CD4-positive, alpha-beta memory T cell (primary cell): ENCODE measurements at regions of chr16 and their contacts with region 1.

Region 1: DNA sequence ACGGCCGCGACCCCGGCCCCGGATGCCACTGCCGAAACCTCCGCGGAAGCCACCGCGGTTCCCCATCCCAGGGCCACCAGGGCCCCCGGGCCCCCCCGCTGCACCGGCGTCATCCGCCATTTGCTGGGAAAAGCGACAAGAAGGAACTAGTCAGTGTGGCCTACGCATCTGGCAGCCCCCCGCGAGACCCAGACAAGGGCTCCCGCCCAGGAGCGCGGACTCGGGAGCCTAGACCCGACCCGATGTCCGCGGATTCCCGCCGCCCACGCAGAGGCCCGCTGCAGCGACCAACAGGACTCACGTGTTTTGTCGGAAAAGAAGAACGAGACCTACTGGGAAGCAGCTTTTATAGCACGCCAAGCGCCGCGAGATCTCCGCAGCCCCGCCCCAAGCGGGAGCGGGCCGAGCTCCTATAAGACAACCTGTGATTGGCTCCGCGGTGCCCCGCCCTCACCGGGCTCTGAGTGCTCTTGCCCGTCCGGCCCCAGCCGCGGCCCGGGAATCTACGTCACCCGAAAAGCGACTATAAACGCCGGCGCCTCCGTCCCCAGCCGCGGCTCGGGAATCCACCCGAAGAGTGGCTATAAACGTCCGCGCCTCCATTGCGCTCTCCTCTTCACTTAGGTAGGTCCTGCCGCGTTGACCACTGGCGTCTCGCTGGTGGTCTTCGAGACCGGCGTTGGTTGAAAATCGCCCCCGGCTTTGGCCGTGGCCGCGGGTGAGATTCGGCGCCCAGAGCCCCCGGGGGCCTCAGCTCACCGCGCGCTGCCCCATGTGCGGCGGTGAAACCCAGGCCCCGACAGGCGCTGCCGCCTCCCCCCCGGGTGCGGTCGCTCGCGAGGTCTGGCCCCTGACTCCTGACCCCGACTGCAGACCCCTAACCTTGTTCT is at the start of gene RPS2:
- DNase-seq: peak; percentile 97 to 99 (median 99)
- H3K4me3 ChIP-seq: peak within 1 kb of the TSS; percentile 78 to 86
- H3K4me3 Mint-ChIP-seq: peak within 1 kb of the TSS; percentile 91 to 97 (median 94)
- H3K27ac ChIP-seq: peak within 1 kb of the TSS; percentile 97
- H3K27ac Mint-ChIP-seq: peak within 1 kb of the TSS; percentile 97 to 99 (median 98)
- H3K4me1 ChIP-seq: peaks cover 50% of the 10 kb centered on the region
- H3K4me1 Mint-ChIP-seq: peaks cover 28 to 59% (median 42%) of the 10 kb centered on the region in 4 donors
- H3K27me3 ChIP-seq: no peaks in the 10 kb centered on the region
- H3K27me3 Mint-ChIP-seq: no peaks in the 10 kb centered on the region
- total RNA-seq, gene RPS2: 2,828 to 2,894 TPM

Region 2: GRCh38 chr16:1782352-1783091 is 182.2 kb before region 1 on chr16 and contains the starts of genes NUBP2 and SPSB3:
- CTCF ChIA-PET with region 1: no interaction called
- POLR2A ChIA-PET with region 1: interaction called, 14 read pairs
- intact Hi-C with region 1: no loop called
- DNase-seq: peak; percentile 97 to 99 (median 99)
- H3K4me3 ChIP-seq: peak within 1 kb of the TSS; percentile 69 to 88
- H3K4me3 Mint-ChIP-seq: peak within 1 kb of the TSS; percentile 91 to 96 (median 94)
- H3K27ac ChIP-seq: peak within 1 kb of the TSS; percentile 79
- H3K27ac Mint-ChIP-seq: peak within 1 kb of the TSS; percentile 92 to 97 (median 94)
- H3K4me1 ChIP-seq: peaks cover 43% of the 10 kb centered on the region
- H3K4me1 Mint-ChIP-seq: peaks cover 13 to 46% (median 30%) of the 10 kb centered on the region in 4 donors
- H3K27me3 ChIP-seq: no peaks in the 10 kb centered on the region
- H3K27me3 Mint-ChIP-seq: no peaks in the 10 kb centered on the region
- total RNA-seq, gene NUBP2: 55.9 to 59.4 TPM
- total RNA-seq, gene SPSB3: 133 to 144 TPM

Region 3: DNA sequence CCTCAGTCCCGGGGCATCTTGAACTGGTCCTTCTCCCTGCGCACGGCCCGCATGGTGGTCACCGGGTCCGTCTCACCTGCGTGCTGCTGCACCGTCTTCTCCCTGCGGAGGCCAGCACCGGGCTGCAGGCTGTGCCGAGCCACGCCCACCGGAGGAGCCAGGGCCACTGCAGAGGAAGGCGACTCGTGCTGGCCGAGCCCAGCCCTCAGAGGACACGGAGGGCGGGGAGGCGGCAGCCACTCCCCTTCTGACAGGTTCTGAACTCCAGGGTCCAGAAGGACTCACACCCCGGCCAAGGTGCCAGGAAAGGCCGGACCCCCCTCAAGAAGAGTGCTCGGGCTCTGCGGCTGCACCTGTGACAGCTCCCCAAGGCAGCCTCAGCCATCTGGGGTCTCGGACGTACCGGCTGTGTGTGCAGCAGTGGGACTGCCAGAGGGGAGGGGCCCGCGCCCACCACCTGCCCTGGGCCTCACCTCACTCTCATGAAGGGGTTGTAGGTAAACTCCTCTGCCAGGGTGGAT is 155.4 kb before region 1 on chr16:
- CTCF ChIA-PET with region 1: no interaction called
- POLR2A ChIA-PET with region 1: no interaction called
- intact Hi-C with region 1: no loop called
- DNase-seq: no peak
- H3K4me3 ChIP-seq: no peak overlapping the region
- H3K4me3 Mint-ChIP-seq: no peak overlapping the region
- H3K27ac ChIP-seq: no peak overlapping the region
- H3K27ac Mint-ChIP-seq: no peak overlapping the region
- H3K4me1 ChIP-seq: no peaks in the 10 kb centered on the region
- H3K4me1 Mint-ChIP-seq: peaks cover 3 to 8% (median 6%) of the 10 kb centered on the region in 4 donors
- H3K27me3 ChIP-seq: no peaks in the 10 kb centered on the region
- H3K27me3 Mint-ChIP-seq: no peaks in the 10 kb centered on the region

Region 4: GRCh38 chr16:1983544-1984346 is 19.0 kb after region 1 on chr16 and contains the start of gene GFER:
- CTCF ChIA-PET with region 1: interaction called, 4 read pairs
- POLR2A ChIA-PET with region 1: interaction called, 99 read pairs
- intact Hi-C with region 1: loop called (anchors 1 kb)
- DNase-seq: peak; percentile 47 to 70 (median 63)
- H3K4me3 ChIP-seq: peak within 1 kb of the TSS; percentile 52 to 64
- H3K4me3 Mint-ChIP-seq: peak within 1 kb of the TSS; percentile 78 to 89 (median 86)
- H3K27ac ChIP-seq: peak within 1 kb of the TSS; percentile 57
- H3K27ac Mint-ChIP-seq: peak within 1 kb of the TSS; percentile 57 to 91 (median 86)
- H3K4me1 ChIP-seq: peaks cover 22% of the 10 kb centered on the region
- H3K4me1 Mint-ChIP-seq: peaks cover 4 to 22% (median 15%) of the 10 kb centered on the region in 4 donors
- H3K27me3 ChIP-seq: peaks cover 20% of the 10 kb centered on the region
- H3K27me3 Mint-ChIP-seq: peaks cover 11 to 14% of the 10 kb centered on the region in 2 donors
- total RNA-seq, gene GFER: 19.6 to 22.6 TPM

Region 5: GRCh38 chr16:2009789-2010510 is 45.2 kb after region 1 on chr16 and contains the start of gene ZNF598:
- CTCF ChIA-PET with region 1: interaction called, 4 read pairs
- POLR2A ChIA-PET with region 1: interaction called, 17 read pairs
- intact Hi-C with region 1: no loop called
- DNase-seq: peak; percentile 76 to 82 (median 80)
- H3K4me3 ChIP-seq: peak within 1 kb of the TSS; percentile 62 to 91
- H3K4me3 Mint-ChIP-seq: peak within 1 kb of the TSS; percentile 88 to 95 (median 92)
- H3K27ac ChIP-seq: peak within 1 kb of the TSS; percentile 93
- H3K27ac Mint-ChIP-seq: peak within 1 kb of the TSS; percentile 92 to 98 (median 98)
- H3K4me1 ChIP-seq: peaks cover 39% of the 10 kb centered on the region
- H3K4me1 Mint-ChIP-seq: peaks cover 23 to 44% (median 33%) of the 10 kb centered on the region in 4 donors
- H3K27me3 ChIP-seq: no peaks in the 10 kb centered on the region
- H3K27me3 Mint-ChIP-seq: no peaks in the 10 kb centered on the region
- total RNA-seq, gene ZNF598: 48.5 to 49.8 TPM

Region 6: GRCh38 chr16:2147981-2148671 is 183.4 kb after region 1 on chr16 and contains the start of gene RAB26:
- CTCF ChIA-PET with region 1: interaction called, 3 read pairs
- POLR2A ChIA-PET with region 1: interaction called, 75 read pairs
- intact Hi-C with region 1: loop called (anchors 1 kb)
- DNase-seq: peak; percentile 53 to 63 (median 59)
- H3K4me3 ChIP-seq: peak within 1 kb of the TSS in 1 of 2 donors; percentile 35
- H3K4me3 Mint-ChIP-seq: peak within 1 kb of the TSS in 6 of 8 donors; percentile 25 to 70 (median 48)
- H3K27ac ChIP-seq: no peak within 1 kb of the TSS
- H3K27ac Mint-ChIP-seq: no peak within 1 kb of the TSS
- H3K4me1 ChIP-seq: peaks cover 48% of the 10 kb centered on the region
- H3K4me1 Mint-ChIP-seq: peaks cover 5 to 33% (median 14%) of the 10 kb centered on the region in 4 donors
- H3K27me3 ChIP-seq: no peaks in the 10 kb centered on the region
- H3K27me3 Mint-ChIP-seq: no peaks in the 10 kb centered on the region
- total RNA-seq, gene RAB26: 0.44 TPM in 1 of 2 experiments, not detected in the other